ENCODE measurements at regions of chr20 and their contacts with region 1.

Region 1: DNA sequence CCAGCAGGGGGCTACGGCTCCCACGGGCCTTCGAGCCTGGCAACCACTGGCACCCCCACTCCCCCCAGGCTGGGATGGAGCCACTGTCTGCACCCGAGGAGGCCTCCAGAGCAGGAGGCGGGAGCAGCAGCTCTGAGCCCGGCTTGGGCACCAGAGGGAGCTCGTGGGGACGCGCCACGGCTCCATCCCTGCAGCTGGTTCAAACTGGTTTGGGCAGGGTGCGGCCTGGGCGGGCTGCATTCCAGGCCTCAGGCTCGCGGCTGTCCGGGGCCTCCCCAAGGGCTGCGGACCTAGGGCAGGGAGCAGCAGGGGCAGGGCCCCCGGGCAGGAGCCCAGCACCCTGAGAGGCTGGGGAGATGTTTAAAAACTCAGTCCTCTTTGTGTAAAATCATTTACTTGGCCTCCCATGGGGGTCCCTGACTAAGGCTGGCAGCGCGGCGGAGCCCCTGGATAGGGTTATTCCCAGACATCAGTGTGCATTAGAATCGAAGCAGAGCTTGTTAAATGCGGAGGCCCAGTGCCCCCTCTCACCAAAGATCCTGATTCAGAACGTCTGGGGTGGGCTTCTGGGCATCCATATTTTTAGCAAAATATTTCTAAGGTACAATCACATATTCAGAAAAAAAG is 4.1 kb upstream of the BCAS4 start:
- DNase-seq: peak; percentile 85
- ATAC-seq: peak; percentile 58
- H3K4me3 ChIP-seq: peak overlapping the region in 4 of 5 experiments; percentile 13 to 36 (median 26)
- H3K4me3 Mint-ChIP-seq: no peak overlapping the region
- H3K27ac ChIP-seq: peak overlapping the region; percentile 81 to 92
- H3K27ac Mint-ChIP-seq: peak overlapping the region; percentile 86
- H3K4me1 ChIP-seq: peaks cover 16 to 26% of the 10 kb centered on the region in 2 donors
- H3K4me1 Mint-ChIP-seq: peaks cover 20% of the 10 kb centered on the region
- H3K27me3 ChIP-seq: no peaks in the 10 kb centered on the region
- H3K27me3 Mint-ChIP-seq: no peaks in the 10 kb centered on the region
- CTCF ChIP-seq: peak; percentile 76

Region 2: GRCh38 chr20:50731055-50731871 is 59.5 kb before region 1 on chr20 and contains the start of gene PARD6B:
- CTCF ChIA-PET with region 1: interaction called, 4 read pairs
- POLR2A ChIA-PET with region 1: no interaction called
- intact Hi-C with region 1: loop called (anchors 1 kb)
- DNase-seq: peak; percentile 100
- ATAC-seq: peak; percentile 94
- H3K4me3 ChIP-seq: peak within 1 kb of the TSS; percentile 47 to 81 (median 71)
- H3K4me3 Mint-ChIP-seq: peak within 1 kb of the TSS; percentile 91
- H3K27ac ChIP-seq: peak within 1 kb of the TSS; percentile 39 to 80
- H3K27ac Mint-ChIP-seq: peak within 1 kb of the TSS; percentile 91
- H3K4me1 ChIP-seq: peaks cover 15% of the 10 kb centered on the region in 2 donors
- H3K4me1 Mint-ChIP-seq: peaks cover 21% of the 10 kb centered on the region
- H3K27me3 ChIP-seq: no peaks in the 10 kb centered on the region
- H3K27me3 Mint-ChIP-seq: peaks cover 4% of the 10 kb centered on the region
- CTCF ChIP-seq: no peak
- total RNA-seq, gene PARD6B: 6.0 and 10.1 TPM in 2 replicates

Region 3: DNA sequence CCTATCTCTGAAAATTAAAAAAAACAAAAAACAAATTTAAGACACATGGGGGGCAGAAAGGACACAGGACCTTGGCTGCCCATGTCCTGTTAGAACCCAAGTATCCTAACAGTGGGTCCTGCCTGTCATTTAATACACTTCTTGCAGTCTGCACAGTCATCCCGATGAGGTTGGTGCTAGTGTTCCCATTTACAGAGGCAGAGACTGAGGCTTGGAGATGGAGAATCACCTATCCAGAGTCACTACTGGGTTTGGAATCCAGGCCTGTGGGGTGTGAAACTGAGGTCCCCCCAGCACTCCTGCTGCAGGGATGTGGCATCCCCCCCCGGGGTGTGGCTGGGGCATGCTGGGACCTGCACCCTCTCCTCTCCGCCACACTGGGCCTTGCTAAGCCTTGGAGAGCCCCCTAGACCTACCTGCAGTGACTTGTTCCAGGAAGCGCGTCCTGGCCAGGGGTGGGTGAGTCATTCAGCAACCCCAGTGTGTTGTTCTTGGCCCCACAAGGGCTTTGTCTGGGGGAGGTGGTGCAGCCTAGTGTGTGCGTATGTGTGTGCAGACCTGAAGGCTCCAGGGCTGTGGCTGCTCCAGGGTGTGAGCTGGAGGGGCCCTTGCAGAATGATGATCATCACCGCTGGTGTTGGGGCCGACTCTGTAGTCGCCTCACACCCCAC is 53.8 kb after region 1 on chr20:
- CTCF ChIA-PET with region 1: interaction called, 16 read pairs
- POLR2A ChIA-PET with region 1: interaction called, 3 read pairs
- intact Hi-C with region 1: loop called (anchors 2 kb)
- DNase-seq: no peak
- ATAC-seq: peak; percentile 82
- H3K4me3 ChIP-seq: no peak overlapping the region
- H3K4me3 Mint-ChIP-seq: peak overlapping the region; percentile 23
- H3K27ac ChIP-seq: no peak overlapping the region
- H3K27ac Mint-ChIP-seq: peak overlapping the region; percentile 80
- H3K4me1 ChIP-seq: peaks cover 14 to 45% of the 10 kb centered on the region in 2 donors
- H3K4me1 Mint-ChIP-seq: peaks cover 44% of the 10 kb centered on the region
- H3K27me3 ChIP-seq: no peaks in the 10 kb centered on the region
- H3K27me3 Mint-ChIP-seq: no peaks in the 10 kb centered on the region
- CTCF ChIP-seq: no peak

Region 4: DNA sequence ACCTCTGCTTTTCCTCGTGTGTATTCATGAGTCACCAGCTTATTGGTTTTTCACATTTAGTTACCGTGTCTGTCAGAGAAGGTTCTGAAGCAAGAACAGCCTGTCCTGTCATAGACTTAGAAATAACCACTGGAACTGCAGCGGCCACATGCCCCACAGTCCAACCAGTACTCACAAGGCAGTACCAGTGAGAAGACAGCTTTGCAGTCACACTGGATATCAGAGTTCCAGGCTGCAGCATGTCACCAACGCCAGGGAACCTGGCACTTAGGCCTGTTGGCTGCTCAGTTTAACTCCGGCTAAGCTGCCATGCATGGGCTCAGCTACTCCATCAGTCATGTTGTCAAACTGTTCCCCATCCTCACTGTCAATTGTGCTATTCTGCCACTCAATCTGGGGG is 100.4 kb after region 1 on chr20:
- CTCF ChIA-PET with region 1: interaction called, 25 read pairs
- POLR2A ChIA-PET with region 1: interaction called, 3 read pairs
- intact Hi-C with region 1: no loop called
- DNase-seq: no peak
- ATAC-seq: no peak
- H3K4me3 ChIP-seq: no peak overlapping the region
- H3K4me3 Mint-ChIP-seq: no peak overlapping the region
- H3K27ac ChIP-seq: no peak overlapping the region
- H3K27ac Mint-ChIP-seq: peak overlapping the region; percentile 51
- H3K4me1 ChIP-seq: no peaks in the 10 kb centered on the region
- H3K4me1 Mint-ChIP-seq: peaks cover 5% of the 10 kb centered on the region
- H3K27me3 ChIP-seq: no peaks in the 10 kb centered on the region
- H3K27me3 Mint-ChIP-seq: no peaks in the 10 kb centered on the region
- CTCF ChIP-seq: no peak

Region 5: DNA sequence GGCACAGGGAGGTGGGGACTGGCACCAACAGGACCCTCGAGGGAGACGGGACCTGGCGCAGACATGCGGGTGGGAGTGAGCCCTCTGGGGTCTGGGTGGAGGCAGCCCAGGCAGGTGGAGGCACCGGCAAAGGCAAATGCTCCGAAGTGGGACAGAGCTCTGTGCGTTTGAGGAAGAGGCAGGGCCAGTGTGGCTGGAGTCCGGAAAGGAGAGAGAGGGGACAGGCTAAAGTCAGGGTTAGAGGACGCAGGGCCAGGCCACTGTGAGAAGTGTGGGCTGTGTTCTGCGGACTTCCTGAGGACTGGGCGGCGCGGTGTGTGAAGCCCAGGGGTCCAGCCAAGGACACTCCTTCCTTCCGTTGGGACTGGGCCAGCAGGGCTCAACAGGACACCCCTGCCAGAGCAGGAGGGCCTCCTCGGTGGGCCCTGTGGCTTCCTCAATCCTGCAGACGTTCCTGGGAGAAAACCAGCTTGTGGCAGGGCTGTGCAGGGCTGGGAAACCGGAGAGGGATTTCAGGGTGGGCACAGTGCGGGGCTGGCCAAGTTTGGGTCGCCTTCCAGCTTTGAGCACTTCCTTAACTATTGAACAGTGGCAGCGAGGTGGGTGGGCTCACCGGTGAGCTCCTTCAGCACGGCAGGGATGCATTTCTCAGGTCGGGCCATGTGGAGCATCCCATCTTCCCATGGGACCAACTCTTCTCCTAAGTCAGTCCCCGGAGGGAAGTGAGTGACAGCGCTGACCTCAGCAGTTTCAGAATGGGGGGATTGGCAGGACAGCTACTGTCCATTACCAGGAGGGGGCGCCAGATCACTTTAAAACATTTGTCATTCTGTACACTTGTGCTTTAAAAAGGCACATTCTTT is 190.3 kb after region 1 on chr20:
- CTCF ChIA-PET with region 1: interaction called, 27 read pairs
- POLR2A ChIA-PET with region 1: no interaction called
- intact Hi-C with region 1: loop called (anchors 1 kb)
- DNase-seq: peak; percentile 79
- ATAC-seq: peak; percentile 80
- H3K4me3 ChIP-seq: no peak overlapping the region
- H3K4me3 Mint-ChIP-seq: no peak overlapping the region
- H3K27ac ChIP-seq: no peak overlapping the region
- H3K27ac Mint-ChIP-seq: no peak overlapping the region
- H3K4me1 ChIP-seq: peaks cover 0 to 4% of the 10 kb centered on the region in 2 donors
- H3K4me1 Mint-ChIP-seq: peaks cover 3% of the 10 kb centered on the region
- H3K27me3 ChIP-seq: peaks cover 0 to 23% (median 2%) of the 10 kb centered on the region in 4 experiments
- H3K27me3 Mint-ChIP-seq: peaks cover 37% of the 10 kb centered on the region
- CTCF ChIP-seq: peak; percentile 93

Region 6: GRCh38 chr20:51404298-51405060 is 613.7 kb after region 1 on chr20:
- CTCF ChIA-PET with region 1: interaction called, 3 read pairs
- POLR2A ChIA-PET with region 1: no interaction called
- intact Hi-C with region 1: loop called (anchors 5 kb)
- DNase-seq: peak; percentile 92
- ATAC-seq: peak; percentile 85
- H3K4me3 ChIP-seq: no peak overlapping the region
- H3K4me3 Mint-ChIP-seq: peak overlapping the region; percentile 49
- H3K27ac ChIP-seq: peak overlapping the region; percentile 86 to 97
- H3K27ac Mint-ChIP-seq: peak overlapping the region; percentile 99
- H3K4me1 ChIP-seq: peaks cover 62 to 74% of the 10 kb centered on the region in 2 donors
- H3K4me1 Mint-ChIP-seq: peaks cover 77% of the 10 kb centered on the region
- H3K27me3 ChIP-seq: no peaks in the 10 kb centered on the region
- H3K27me3 Mint-ChIP-seq: no peaks in the 10 kb centered on the region
- CTCF ChIP-seq: no peak